ENCODE measurements at regions of chr12 and their contacts with region 1.

Region 1: GRCh38 chr12:54379401-54380201 is 4.9 kb downstream of the ZNF385A start:
- DNase-seq: peak; percentile 83 to 89 (median 85)
- H3K4me3 ChIP-seq: peak overlapping the region in 3 of 7 experiments; percentile 26 to 39 (median 34)
- H3K27ac ChIP-seq: no peak overlapping the region
- H3K4me1 ChIP-seq: peaks cover 0 to 22% (median 17%) of the 10 kb centered on the region in 4 experiments
- H3K27me3 ChIP-seq: no peaks in the 10 kb centered on the region

Region 2: GRCh38 chr12:54294152-54294952 is 85.2 kb before region 1 on chr12:
- CTCF ChIA-PET with region 1: interaction called, 33 read pairs
- POLR2A ChIA-PET with region 1: no interaction called
- DNase-seq: peak; percentile 64 to 76 (median 73)
- H3K4me3 ChIP-seq: peak overlapping the region in 5 of 7 experiments; percentile 40 to 86 (median 59)
- H3K27ac ChIP-seq: peak overlapping the region; percentile 22 to 95
- H3K4me1 ChIP-seq: peaks cover 24 to 93% (median 86%) of the 10 kb centered on the region in 4 experiments
- H3K27me3 ChIP-seq: no peaks in the 10 kb centered on the region

Region 3: GRCh38 chr12:54359033-54359761 is 20.4 kb before region 1 on chr12:
- CTCF ChIA-PET with region 1: interaction called, 15 read pairs
- POLR2A ChIA-PET with region 1: interaction called, 4 read pairs
- DNase-seq: peak; percentile 99
- H3K4me3 ChIP-seq: peak overlapping the region; percentile 56 to 78 (median 74)
- H3K27ac ChIP-seq: peak overlapping the region; percentile 51 to 90
- H3K4me1 ChIP-seq: peaks cover 13 to 62% (median 53%) of the 10 kb centered on the region in 4 experiments
- H3K27me3 ChIP-seq: no peaks in the 10 kb centered on the region

Region 4: GRCh38 chr12:54398995-54399793 is 19.6 kb after region 1 on chr12:
- CTCF ChIA-PET with region 1: interaction called, 31 read pairs
- POLR2A ChIA-PET with region 1: no interaction called
- DNase-seq: peak; percentile 82 to 93 (median 89)
- H3K4me3 ChIP-seq: no peak overlapping the region
- H3K27ac ChIP-seq: no peak overlapping the region
- H3K4me1 ChIP-seq: peaks cover 0 to 10% (median 2%) of the 10 kb centered on the region in 4 experiments
- H3K27me3 ChIP-seq: no peaks in the 10 kb centered on the region

Region 5: GRCh38 chr12:54428050-54429013 is 48.7 kb after region 1 on chr12:
- CTCF ChIA-PET with region 1: interaction called, 16 read pairs
- POLR2A ChIA-PET with region 1: no interaction called
- DNase-seq: peak in 2 of 3 donors; percentile 61 to 74
- H3K4me3 ChIP-seq: peak overlapping the region in 4 of 7 experiments; percentile 1 to 44 (median 30)
- H3K27ac ChIP-seq: peak overlapping the region in 1 of 2 experiments; percentile 63
- H3K4me1 ChIP-seq: peaks cover 4 to 82% (median 55%) of the 10 kb centered on the region in 4 experiments
- H3K27me3 ChIP-seq: no peaks in the 10 kb centered on the region

Region 6: GRCh38 chr12:54579696-54580333 is 200.2 kb after region 1 on chr12:
- CTCF ChIA-PET with region 1: no interaction called
- POLR2A ChIA-PET with region 1: no interaction called
- DNase-seq: peak; percentile 73 to 83 (median 80)
- H3K4me3 ChIP-seq: peak overlapping the region in 1 of 7 experiments; percentile 14
- H3K27ac ChIP-seq: no peak overlapping the region
- H3K4me1 ChIP-seq: peaks cover 0 to 4% (median 0%) of the 10 kb centered on the region in 4 experiments
- H3K27me3 ChIP-seq: peaks cover 0 to 7% (median 5%) of the 10 kb centered on the region in 5 experiments

Region 7: GRCh38 chr12:54740882-54741281 is 361.3 kb after region 1 on chr12:
- CTCF ChIA-PET with region 1: no interaction called
- POLR2A ChIA-PET with region 1: no interaction called
- DNase-seq: no peak
- H3K4me3 ChIP-seq: no peak overlapping the region
- H3K27ac ChIP-seq: no peak overlapping the region
- H3K4me1 ChIP-seq: no peaks in the 10 kb centered on the region
- H3K27me3 ChIP-seq: no peaks in the 10 kb centered on the region